Panc1 (cell line): ENCODE measurements at regions of chr4 and their contacts with region 1.

Region 1: GRCh38 chr4:147891476-147892115 is 159.7 kb downstream of the ARHGAP10 start:
- DNase-seq: no peak
- ATAC-seq: no peak
- H3K4me3 ChIP-seq: no peak overlapping the region
- H3K27ac ChIP-seq: no peak overlapping the region
- H3K4me1 ChIP-seq: no peaks in the 10 kb centered on the region
- H3K27me3 ChIP-seq: no peaks in the 10 kb centered on the region
- CTCF ChIP-seq: no peak

Region 2: DNA sequence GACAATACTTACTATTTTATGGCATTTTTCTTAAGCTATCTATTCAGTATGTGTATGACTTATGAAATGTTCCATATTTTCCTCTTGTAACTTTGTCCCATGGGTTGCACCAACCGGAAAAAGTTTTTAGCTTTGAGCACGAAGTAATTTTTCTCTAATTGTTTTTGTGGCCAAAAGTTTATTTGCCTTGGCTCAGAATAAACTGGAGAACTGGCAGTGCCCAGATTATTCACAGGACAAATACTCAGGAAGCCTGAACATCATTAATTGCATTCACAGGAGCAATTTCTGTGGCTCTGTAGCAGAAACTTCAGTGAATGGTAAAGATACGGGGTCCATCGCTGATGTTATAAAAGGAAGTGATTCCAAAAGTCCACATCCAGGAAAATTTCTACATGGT is 24.8 kb after region 1 on chr4:
- CTCF ChIA-PET with region 1: no interaction called
- POLR2A ChIA-PET with region 1: interaction called, 10 read pairs
- in situ Hi-C with region 1: no loop called
- intact Hi-C with region 1: no loop called
- DNase-seq: no peak
- ATAC-seq: no peak
- H3K4me3 ChIP-seq: no peak overlapping the region
- H3K27ac ChIP-seq: no peak overlapping the region
- H3K4me1 ChIP-seq: no peaks in the 10 kb centered on the region
- H3K27me3 ChIP-seq: no peaks in the 10 kb centered on the region
- CTCF ChIP-seq: no peak

Region 3: DNA sequence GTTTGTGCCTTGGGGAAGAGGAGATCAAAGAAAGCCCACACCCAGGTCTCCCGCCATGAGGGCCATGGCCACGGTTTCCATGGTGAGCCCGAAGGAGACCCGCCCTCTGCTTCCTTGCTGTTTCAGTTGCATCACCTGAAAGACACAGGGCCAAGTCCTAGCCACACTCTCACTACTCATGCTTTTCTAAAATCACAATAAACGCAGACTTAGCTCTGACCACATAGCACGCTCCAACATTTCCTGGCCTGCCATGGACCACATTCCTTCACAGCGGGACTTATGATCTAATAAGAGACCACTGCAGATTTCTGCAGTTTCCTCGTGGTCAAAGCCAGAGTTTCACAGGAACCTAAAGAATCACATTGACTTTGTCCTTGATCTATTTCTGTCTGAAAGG is 976.6 kb after region 1 on chr4:
- CTCF ChIA-PET with region 1: no interaction called
- POLR2A ChIA-PET with region 1: no interaction called
- in situ Hi-C with region 1: no loop called
- intact Hi-C with region 1: no loop called
- DNase-seq: no peak
- ATAC-seq: no peak
- H3K4me3 ChIP-seq: no peak overlapping the region
- H3K27ac ChIP-seq: no peak overlapping the region
- H3K4me1 ChIP-seq: no peaks in the 10 kb centered on the region
- H3K27me3 ChIP-seq: no peaks in the 10 kb centered on the region
- CTCF ChIP-seq: no peak